WTC11 (cell line): ENCODE measurements at regions of chr20 and their contacts with region 1.

Region 1: DNA sequence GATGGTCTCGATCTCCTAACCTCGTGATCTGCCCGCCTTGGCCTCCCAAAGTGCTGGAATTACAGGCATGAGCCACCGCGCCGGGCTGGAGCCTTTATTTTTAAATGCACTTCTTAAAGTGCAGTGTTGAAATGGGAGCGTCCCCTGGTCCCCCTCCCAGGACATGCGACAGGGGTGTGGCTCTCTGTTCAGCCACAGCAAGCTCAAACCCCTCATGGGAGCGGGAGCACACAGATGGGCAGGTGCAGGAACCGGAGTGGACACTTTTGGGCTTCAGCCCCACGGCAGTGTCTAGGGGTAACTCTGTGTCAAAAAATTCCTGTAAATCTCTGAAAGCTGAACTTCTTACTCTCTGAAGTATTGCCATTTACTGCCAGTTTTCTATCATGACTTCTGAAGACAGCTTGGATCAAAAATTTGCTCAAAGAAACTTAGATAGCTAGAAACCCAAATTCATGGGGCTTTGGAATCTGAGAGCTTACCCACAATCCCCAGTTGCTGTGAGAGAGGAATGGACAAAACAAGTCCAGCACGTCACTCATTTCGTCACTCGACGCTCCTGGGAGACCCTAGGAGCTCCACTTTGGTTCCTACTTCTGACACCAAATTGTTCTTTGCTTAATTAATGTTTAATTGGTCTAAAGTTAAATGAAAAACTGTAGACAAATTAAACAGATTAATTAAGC is 18.1 kb upstream of the L3MBTL1 start:
- DNase-seq: no peak
- ATAC-seq: no peak
- H3K4me3 Mint-ChIP-seq: no peak overlapping the region
- H3K27ac Mint-ChIP-seq: no peak overlapping the region
- H3K4me1 Mint-ChIP-seq: no peaks in the 10 kb centered on the region
- H3K27me3 Mint-ChIP-seq: peaks cover 8% of the 10 kb centered on the region
- CTCF ChIP-seq: no peak

Region 2: GRCh38 chr20:44475694-44476560 is 986.6 kb after region 1 on chr20 and contains the start of gene TTPAL:
- CTCF ChIA-PET with region 1: no interaction called
- POLR2A ChIA-PET with region 1: interaction called, 10 read pairs
- DNase-seq: peak; percentile 90
- ATAC-seq: peak; percentile 96
- H3K4me3 Mint-ChIP-seq: peak within 1 kb of the TSS; percentile 90
- H3K27ac Mint-ChIP-seq: peak within 1 kb of the TSS; percentile 92
- H3K4me1 Mint-ChIP-seq: peaks cover 14% of the 10 kb centered on the region
- H3K27me3 Mint-ChIP-seq: peaks cover 2% of the 10 kb centered on the region
- CTCF ChIP-seq: no peak
- total RNA-seq, gene TTPAL: 10.3 to 16.5 TPM (median 13.7 TPM) in 3 replicates